Caco-2 (cell line): ENCODE measurements at regions of chr2 and their contacts with region 1.

Region 1: DNA sequence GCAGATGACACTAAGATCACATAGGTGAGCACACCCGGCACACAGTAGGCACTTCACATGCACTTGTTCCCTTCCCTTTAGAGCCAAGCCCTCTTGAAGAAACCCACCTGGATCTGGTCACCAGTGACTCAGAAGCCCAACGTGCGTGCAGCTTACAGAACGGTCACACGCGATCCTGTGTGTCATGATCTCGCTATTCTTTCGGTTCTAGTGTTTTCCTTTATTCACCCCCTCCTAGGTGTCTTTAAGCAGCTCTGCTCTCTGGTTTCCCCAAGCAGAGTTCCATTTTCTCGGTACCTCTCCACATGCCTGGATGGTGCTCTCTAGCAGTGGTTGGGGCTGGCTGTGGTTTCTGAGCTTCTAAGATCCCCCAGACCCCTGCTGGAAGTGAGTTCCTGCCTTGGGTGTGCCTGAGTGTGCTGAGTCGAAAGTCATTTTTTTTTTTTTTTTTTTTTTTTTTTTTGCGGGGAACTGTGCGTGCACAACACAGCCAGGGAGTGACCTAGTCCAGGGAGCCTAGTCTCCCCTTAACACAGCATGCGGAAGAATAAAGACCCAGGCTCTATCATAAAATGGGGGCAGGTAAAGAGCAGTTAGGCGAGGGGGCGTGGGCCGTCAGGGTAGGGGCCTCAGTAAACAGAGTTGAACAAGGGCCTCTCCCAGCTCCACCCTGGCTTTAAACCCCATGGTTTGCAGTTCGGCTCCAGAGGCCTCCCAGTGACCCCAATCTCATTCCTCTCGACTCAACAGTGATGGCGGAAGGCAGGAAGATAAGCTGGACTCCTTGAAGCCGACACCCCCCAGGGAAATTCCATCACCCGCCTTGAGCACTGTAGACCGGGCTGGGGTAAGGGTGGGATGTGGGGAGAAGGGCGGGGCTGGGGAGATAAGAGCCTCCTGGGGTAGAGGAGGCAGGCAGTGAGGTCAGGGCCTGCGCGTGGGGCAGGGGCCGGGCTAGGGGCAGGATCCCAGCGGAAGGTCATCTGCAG is 29.8 kb upstream of the DNMT3A start:
- DNase-seq: peak; percentile 41 to 79
- H3K4me3 ChIP-seq: no peak overlapping the region
- H3K4me3 Mint-ChIP-seq: no peak overlapping the region
- H3K27ac Mint-ChIP-seq: peak overlapping the region; percentile 56
- H3K4me1 ChIP-seq: peaks cover 23% of the 10 kb centered on the region
- H3K4me1 Mint-ChIP-seq: peaks cover 20% of the 10 kb centered on the region
- H3K27me3 ChIP-seq: no peaks in the 10 kb centered on the region
- H3K27me3 Mint-ChIP-seq: no peaks in the 10 kb centered on the region
- CTCF ChIP-seq: no peak

Region 2: DNA sequence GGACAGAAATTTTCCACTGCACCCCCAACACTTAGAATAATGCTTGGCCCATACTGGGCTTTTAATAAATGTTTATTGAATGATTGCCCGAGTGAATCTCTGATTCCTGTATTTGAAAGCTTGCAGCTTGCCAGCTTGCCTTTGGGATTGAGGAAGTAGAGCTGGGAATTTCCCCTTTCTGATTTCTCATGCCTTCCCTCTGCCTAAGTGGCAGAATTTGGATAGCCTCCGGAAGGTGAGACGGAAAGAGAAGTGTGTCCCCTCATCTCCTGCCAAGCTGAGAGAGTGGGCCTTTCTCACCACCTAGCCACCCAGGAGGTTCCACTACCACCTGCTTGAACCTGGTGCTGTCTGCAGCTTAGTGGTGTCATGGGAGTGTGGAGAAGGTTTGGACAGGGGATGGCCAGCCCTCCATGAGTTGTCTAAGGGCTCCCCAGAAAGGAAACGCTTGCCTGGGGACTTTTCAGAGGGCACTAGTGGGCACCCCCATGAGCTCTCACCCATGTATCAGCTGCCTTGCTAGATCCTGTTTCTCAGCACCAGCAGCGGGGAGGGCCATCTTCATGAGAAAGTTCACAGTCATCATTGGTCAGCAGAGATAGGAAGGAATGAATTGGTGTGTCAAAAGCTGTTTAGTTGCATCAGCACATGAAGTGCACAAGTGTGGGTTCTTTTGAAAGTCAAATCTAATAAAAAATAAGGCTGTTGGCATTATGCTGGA is 889.1 kb before region 1 on chr2:
- CTCF ChIA-PET with region 1: no interaction called
- POLR2A ChIA-PET with region 1: no interaction called
- intact Hi-C with region 1: no loop called
- DNase-seq: no peak
- H3K4me3 ChIP-seq: no peak overlapping the region
- H3K4me3 Mint-ChIP-seq: no peak overlapping the region
- H3K27ac Mint-ChIP-seq: no peak overlapping the region
- H3K4me1 ChIP-seq: peaks cover 32% of the 10 kb centered on the region
- H3K4me1 Mint-ChIP-seq: peaks cover 35% of the 10 kb centered on the region
- H3K27me3 ChIP-seq: no peaks in the 10 kb centered on the region
- H3K27me3 Mint-ChIP-seq: no peaks in the 10 kb centered on the region
- CTCF ChIP-seq: no peak

Region 3: GRCh38 chr2:25514043-25514637 is 142.6 kb after region 1 on chr2:
- CTCF ChIA-PET with region 1: interaction called, 11 read pairs
- POLR2A ChIA-PET with region 1: no interaction called
- intact Hi-C with region 1: no loop called
- DNase-seq: no peak
- H3K4me3 ChIP-seq: no peak overlapping the region
- H3K4me3 Mint-ChIP-seq: no peak overlapping the region
- H3K27ac Mint-ChIP-seq: peak overlapping the region; percentile 69
- H3K4me1 ChIP-seq: peaks cover 16% of the 10 kb centered on the region
- H3K4me1 Mint-ChIP-seq: peaks cover 26% of the 10 kb centered on the region
- H3K27me3 ChIP-seq: no peaks in the 10 kb centered on the region
- H3K27me3 Mint-ChIP-seq: no peaks in the 10 kb centered on the region
- CTCF ChIP-seq: no peak